Gastrocnemius medialis (tissue), 4 donors: ENCODE measurements at regions of chr9 and their contacts with region 1.

Region 1: DNA sequence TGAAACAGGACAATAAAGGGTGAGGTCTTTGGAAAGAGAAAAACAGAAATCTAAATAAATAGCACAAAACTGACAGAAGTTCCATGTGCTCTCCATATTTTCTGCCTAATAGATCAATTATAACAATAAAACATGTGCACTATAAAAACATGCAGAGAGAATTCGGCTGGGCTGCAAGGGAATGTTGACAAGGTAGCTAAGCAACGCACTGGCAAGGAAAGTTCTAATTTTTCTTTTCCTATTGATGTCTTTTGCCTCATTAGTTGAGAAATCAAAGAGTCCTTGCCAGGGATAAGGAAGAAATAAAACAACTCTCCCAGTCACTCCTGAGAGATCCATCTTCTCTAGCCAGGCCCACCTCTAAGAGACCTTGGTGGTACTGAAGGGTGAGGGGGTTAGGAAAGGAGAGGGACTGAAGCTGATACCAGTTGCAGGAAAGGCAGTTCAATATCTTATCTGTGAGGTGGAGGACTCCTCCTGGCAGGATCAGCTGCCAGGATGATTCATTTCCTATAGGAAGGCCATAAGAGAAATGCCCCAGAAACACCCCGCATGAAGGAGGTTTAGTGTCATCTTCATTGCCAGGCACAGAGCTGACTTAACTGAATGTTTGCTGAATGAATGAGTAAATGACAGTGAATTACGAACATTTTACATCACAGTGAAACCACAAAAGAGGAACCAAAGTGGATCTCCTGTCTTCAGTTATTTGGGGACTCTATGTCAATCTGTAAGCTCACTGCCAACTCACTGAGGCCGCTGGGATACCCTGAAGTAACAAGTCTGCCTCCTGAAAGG is 63.7 kb upstream of the IFNK start:
- DNase-seq: no peak
- ATAC-seq: peak in 1 of 2 donors; percentile 30
- H3K4me3 ChIP-seq: no peak overlapping the region
- H3K27ac ChIP-seq: no peak overlapping the region
- H3K4me1 ChIP-seq: peaks cover 10 to 21% of the 10 kb centered on the region in 2 donors
- H3K27me3 ChIP-seq: no peaks in the 10 kb centered on the region
- CTCF ChIP-seq: no peak
- POLR2A ChIP-seq: no peak

Region 2: GRCh38 chr9:26856413-26857032 is 603.9 kb before region 1 on chr9:
- in situ Hi-C with region 1: no loop called
- intact Hi-C with region 1: no loop called
- DNase-seq: no peak
- ATAC-seq: no peak
- H3K4me3 ChIP-seq: no peak overlapping the region
- H3K27ac ChIP-seq: no peak overlapping the region
- H3K4me1 ChIP-seq: no peaks in the 10 kb centered on the region
- H3K27me3 ChIP-seq: no peaks in the 10 kb centered on the region
- CTCF ChIP-seq: peak in 3 of 5 experiments; percentile 8 to 23 (median 20)
- POLR2A ChIP-seq: no peak

Region 3: GRCh38 chr9:27407986-27408385 is 52.4 kb before region 1 on chr9:
- in situ Hi-C with region 1: loop called in 1 of 4 experiments (anchors 10 kb)
- intact Hi-C with region 1: no loop called
- DNase-seq: no peak
- ATAC-seq: no peak
- H3K4me3 ChIP-seq: no peak overlapping the region
- H3K27ac ChIP-seq: no peak overlapping the region
- H3K4me1 ChIP-seq: peaks cover 0 to 7% of the 10 kb centered on the region in 2 donors
- H3K27me3 ChIP-seq: no peaks in the 10 kb centered on the region
- CTCF ChIP-seq: no peak
- POLR2A ChIP-seq: no peak

Region 4: DNA sequence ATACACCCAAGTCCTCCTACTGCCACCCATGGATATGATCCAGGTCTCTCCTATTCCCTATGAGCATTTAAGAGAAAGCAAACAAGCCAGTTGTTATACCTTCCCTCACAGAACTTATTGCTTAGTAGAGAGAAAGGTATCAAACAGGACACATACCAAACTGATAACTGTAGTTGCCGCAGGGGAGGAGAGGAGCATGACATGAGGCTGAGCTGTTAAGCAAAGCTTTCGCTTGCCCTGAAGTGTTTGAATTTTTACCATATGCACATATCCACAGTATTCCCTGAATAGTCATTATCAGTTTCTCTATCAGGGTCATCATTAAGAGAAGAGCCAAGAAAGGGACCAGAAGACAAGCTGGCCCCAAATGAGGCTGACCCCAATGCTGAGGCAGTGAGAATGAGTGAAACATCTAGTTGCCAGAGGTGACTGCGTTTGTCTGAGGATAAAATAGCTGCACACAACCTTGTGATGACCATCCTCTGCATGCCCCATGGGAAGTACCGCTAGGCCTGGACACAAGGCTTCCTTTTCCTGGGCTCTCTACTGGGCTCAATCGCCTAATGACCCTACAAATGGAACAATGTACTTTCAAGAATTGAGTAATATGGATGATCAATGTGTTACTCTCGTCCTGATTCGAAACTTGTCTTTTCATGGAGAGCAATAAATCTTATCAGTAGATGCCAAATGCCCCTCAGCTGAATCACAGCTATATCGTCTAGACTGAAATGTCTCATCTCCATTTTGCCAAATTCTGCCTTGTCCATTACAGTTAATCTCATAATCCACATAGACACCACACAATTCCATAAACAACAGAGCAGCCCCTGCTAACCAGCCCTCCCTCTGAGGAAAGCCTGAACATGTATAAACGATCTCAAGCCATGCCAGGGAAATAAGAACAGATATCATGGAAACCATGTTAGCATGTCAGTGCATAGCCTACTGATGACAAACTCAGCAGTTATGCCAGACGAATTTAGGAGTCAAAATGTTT is 59.3 kb after region 1 on chr9:
- in situ Hi-C with region 1: loop called in 2 of 4 experiments (anchors 5 to 10 kb)
- intact Hi-C with region 1: no loop called
- DNase-seq: no peak
- ATAC-seq: no peak
- H3K4me3 ChIP-seq: no peak overlapping the region
- H3K27ac ChIP-seq: no peak overlapping the region
- H3K4me1 ChIP-seq: peaks cover 0 to 12% of the 10 kb centered on the region in 2 donors
- H3K27me3 ChIP-seq: no peaks in the 10 kb centered on the region
- CTCF ChIP-seq: no peak
- POLR2A ChIP-seq: no peak